Posterior cingulate gyrus (tissue), 11 donors: ENCODE measurements at regions of chr9 and their contacts with region 1.

Region 1: DNA sequence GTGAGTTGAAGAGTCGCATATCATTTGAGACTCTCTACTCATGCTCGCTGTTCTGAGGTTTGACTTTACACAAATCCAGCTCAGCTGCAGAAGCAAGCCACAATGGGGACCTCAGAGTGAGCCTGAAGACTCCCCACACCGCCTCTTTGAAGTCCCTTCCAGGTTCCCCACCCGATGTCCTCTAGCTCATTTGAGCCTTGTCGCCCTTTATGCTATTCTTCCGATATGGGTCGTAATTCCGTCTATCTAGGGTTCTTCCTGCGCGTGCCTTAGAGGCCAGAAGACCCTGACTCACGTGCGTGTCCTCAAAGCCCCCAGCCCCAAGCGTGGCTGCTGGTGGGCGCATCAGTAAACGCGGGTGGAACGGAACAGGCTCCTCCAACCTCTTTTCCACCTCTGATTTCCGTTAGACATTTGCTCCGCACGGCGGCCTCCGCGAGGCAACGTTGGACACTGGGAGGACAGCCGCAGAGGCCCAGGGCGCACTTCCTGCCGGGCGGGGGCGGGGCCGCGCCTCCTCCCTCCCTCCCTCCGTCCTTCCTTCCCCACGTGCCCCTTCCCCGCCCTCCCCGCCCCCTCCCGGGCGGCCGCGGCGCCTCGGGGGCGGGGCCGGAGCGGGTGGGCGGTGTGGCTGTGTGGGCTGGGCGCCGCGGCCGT is at the start of gene SNX30:
- DNase-seq: peak; percentile 83 to 98 (median 88)

Region 2: GRCh38 chr9:112717661-112718341 is 32.4 kb before region 1 on chr9 and contains the start of gene INIP:
- intact Hi-C with region 1: loop called (anchors 1 kb)
- DNase-seq: peak; percentile 96 to 100 (median 96)

Region 3: GRCh38 chr9:112793213-112793810 is 43.1 kb after region 1 on chr9:
- intact Hi-C with region 1: loop called (anchors 1 kb)
- DNase-seq: peak; percentile 45 to 96 (median 76)

Region 4: GRCh38 chr9:112844771-112845542 is 94.7 kb after region 1 on chr9:
- intact Hi-C with region 1: loop called (anchors 2 kb)
- DNase-seq: peak; percentile 51 to 96 (median 79)

Region 5: GRCh38 chr9:112887381-112887780 is 137.1 kb after region 1 on chr9:
- intact Hi-C with region 1: no loop called
- DNase-seq: peak in 2 of 10 donors; percentile 15 to 27